ENCODE measurements at regions of chr15 and their contacts with region 1.

Region 1: GRCh38 chr15:34587717-34588674 is 4.5 kb upstream of the GOLGA8B start:
- DNase-seq: peak; percentile 55
- H3K4me3 Mint-ChIP-seq: peak overlapping the region; percentile 78
- H3K27ac Mint-ChIP-seq: peak overlapping the region; percentile 7
- H3K4me1 Mint-ChIP-seq: peaks cover 20% of the 10 kb centered on the region
- H3K27me3 Mint-ChIP-seq: peaks cover 17% of the 10 kb centered on the region

Region 2: DNA sequence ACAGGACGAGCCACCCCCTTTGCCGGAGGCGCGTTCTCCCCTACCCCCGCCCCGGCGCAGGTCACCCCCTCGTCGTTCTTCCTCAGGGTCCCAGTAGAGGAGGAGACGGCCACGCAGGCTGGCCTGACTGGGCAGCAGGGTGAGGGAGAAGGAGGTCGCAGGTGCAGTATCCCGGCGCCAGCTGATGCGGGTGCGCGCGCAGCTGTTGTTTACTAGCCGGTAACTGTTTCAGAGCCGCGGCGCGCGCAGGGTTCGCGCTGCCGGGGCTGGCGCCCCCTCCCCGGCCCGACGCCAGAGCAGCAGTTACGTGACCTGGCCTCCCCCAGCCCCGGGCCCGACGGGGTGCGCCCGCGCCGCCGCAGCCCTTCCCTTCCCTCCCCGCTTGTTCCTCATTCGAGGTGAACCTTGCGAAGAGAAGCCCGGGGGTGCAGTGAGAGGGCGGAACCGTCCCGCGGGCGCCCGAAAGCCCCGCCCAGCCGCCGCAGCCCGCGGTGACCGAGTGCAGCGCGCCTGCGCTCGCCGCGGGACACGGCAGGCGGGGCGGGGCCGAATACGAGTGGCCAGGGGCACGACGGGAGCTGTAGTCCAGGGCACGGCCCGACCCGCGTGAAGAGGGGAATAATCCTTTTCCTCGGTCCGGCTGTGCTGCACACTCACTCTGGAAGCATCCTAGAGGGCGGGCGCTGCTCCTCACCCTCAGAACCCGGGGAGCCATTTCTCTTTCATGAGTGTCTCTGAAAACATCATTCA is 250.3 kb before region 1 on chr15 and contains the start of gene SLC12A6:
- intact Hi-C with region 1: loop called (anchors 10 kb)
- DNase-seq: peak; percentile 88
- H3K4me3 Mint-ChIP-seq: peak within 1 kb of the TSS; percentile 98
- H3K27ac Mint-ChIP-seq: peak within 1 kb of the TSS; percentile 95
- H3K4me1 Mint-ChIP-seq: peaks cover 56% of the 10 kb centered on the region
- H3K27me3 Mint-ChIP-seq: no peaks in the 10 kb centered on the region
- total RNA-seq, gene SLC12A6: 16.6 and 17.0 TPM in 2 replicates

Region 3: DNA sequence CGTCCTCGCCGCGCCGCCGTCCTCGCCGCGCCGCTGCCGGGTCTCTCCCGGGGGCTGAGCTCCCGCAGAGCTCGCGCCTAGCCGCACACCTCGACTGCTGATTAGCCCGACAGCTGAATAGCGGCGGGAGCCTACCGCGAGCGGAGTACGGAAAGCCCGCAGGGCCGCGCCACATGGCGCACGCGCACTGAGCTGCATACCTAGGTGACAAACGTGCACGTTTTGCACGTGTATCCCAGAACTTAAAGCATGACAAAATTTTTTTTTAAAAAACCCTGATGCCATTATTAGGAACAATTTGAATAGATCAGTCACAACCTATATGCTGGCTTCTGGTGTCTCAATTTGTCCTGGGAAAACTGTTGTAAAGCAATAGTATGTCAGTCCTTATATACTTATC is 150.3 kb before region 1 on chr15 and contains the start of gene GOLGA8A:
- intact Hi-C with region 1: loop called (anchors 5 kb)
- DNase-seq: peak; percentile 79
- H3K4me3 Mint-ChIP-seq: peak within 1 kb of the TSS; percentile 92
- H3K27ac Mint-ChIP-seq: peak within 1 kb of the TSS; percentile 95
- H3K4me1 Mint-ChIP-seq: peaks cover 20% of the 10 kb centered on the region
- H3K27me3 Mint-ChIP-seq: peaks cover 14% of the 10 kb centered on the region
- total RNA-seq, gene GOLGA8A: 238 and 258 TPM in 2 replicates

Region 4: DNA sequence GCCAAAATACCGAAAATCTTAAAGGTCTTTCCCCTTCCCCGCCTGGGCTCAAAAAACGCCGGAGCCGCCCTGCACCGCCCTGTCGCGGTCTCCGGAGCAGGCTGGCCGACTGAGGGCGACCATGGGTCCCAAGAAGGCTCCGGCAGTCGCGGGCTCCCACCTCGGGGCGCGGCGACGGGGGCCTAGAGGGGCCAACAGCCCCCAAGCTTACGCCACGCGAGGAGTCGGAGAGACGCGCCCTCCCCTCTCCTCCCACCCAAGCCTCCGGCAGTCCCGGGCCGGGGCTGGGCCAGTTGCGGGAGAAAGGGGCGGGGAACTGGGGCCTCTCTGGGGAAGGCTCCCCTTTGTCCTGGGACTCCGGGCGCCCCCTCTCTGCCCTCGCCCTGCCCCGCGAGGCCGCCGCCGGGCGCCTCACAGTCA is 73.7 kb before region 1 on chr15:
- intact Hi-C with region 1: loop called (anchors 2 kb)
- DNase-seq: no peak
- H3K4me3 Mint-ChIP-seq: peak overlapping the region; percentile 77
- H3K27ac Mint-ChIP-seq: no peak overlapping the region
- H3K4me1 Mint-ChIP-seq: peaks cover 15% of the 10 kb centered on the region
- H3K27me3 Mint-ChIP-seq: peaks cover 57% of the 10 kb centered on the region

Region 5: GRCh38 chr15:34610354-34610753 is 22.4 kb after region 1 on chr15:
- intact Hi-C with region 1: no loop called
- DNase-seq: no peak
- H3K4me3 Mint-ChIP-seq: no peak overlapping the region
- H3K27ac Mint-ChIP-seq: no peak overlapping the region
- H3K4me1 Mint-ChIP-seq: peaks cover 13% of the 10 kb centered on the region
- H3K27me3 Mint-ChIP-seq: peaks cover 51% of the 10 kb centered on the region